Left ventricle myocardium inferior (tissue), 1 donor: ENCODE measurements at regions of chr5 and their contacts with region 1.

Region 1: DNA sequence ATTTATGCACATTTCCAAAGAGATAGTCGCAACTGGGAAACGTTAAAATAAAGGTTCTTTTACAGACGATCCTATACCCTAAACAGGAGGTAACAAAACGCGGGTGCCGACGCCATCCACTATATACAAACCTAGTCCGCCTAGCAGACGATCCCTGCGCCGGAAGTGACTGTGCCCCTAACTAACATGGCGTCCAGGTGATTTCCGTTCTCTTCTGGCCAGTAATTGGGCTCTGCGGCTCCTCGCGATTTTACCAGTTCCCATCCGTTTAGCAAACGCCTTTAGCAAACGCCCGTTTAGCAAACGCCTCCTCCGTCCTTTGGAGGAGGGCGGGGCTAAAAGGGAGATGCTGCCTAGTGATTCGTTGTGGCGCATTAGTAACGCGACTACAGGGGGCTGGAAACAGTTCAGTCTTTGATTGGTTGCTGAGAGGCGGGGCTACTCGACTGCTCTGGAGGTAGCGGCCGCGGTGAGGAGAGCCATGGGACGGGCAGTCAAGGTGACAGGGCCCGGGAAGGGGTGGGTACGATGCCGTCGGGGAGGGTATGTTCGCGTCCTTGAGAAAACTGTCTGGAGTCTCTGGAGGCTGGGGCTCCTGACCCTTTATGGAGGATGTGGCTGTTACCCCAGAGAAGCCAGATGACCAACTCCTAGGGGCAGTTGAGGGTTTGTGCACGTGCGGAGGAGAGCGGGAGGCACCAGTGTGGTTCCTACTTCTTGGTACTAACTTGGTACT is at the start of gene LYRM7:
- DNase-seq: peak; percentile 95
- H3K4me3 ChIP-seq: peak within 1 kb of the TSS; percentile 76
- H3K27ac ChIP-seq: peak within 1 kb of the TSS; percentile 87
- H3K4me1 ChIP-seq: peaks cover 27% of the 10 kb centered on the region
- H3K27me3 ChIP-seq: no peaks in the 10 kb centered on the region
- CTCF ChIP-seq: no peak
- total RNA-seq, gene LYRM7: 33.0 TPM

Region 2: DNA sequence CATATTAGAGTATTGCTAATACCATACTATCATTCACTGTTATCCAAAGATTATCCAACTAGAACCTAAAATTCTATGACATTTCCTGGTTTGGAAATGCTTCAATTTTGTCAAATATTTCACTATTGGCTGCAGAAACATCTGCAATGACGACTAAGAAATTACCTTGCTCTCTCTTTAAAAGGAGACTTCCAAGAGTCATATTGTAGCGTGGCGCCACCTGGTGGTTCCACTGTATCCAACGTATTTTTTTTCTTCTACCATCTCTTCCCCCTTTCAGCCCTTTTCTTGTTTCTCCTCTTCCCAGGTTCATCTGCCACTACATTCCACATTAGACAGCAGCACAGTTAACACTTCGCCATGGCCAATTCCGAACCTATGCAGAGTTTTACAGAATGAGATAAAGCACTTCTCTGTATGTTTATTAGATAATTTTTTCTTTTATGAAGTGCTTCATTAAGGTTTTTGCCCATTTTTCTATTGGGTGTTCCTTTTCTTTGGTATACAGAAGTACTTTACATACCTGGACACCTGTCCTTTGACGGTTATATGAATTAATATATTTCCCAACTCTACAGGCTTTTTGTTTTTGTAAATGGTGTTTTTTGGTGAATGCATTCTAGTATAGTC is 246.6 kb after region 1 on chr5:
- intact Hi-C with region 1: loop called (anchors 5 kb)
- DNase-seq: peak; percentile 66
- H3K4me3 ChIP-seq: no peak overlapping the region
- H3K27ac ChIP-seq: no peak overlapping the region
- H3K4me1 ChIP-seq: no peaks in the 10 kb centered on the region
- H3K27me3 ChIP-seq: no peaks in the 10 kb centered on the region
- CTCF ChIP-seq: peak; percentile 87